Activated CD8-positive, alpha-beta T cell treated with anti-CD3 and anti-CD28 coated beads, Interleukin-2, amount 10 ng/mL, durations not matched to agents 7 days and 5 days (primary cell): ENCODE measurements at regions of chr3 and their contacts with region 1.

Region 1: GRCh38 chr3:192816351-192816750 is 89.0 kb upstream of the FGF12 start:
- DNase-seq: no peak
- ATAC-seq: no peak
- H3K4me3 Mint-ChIP-seq: no peak overlapping the region
- H3K27ac Mint-ChIP-seq: no peak overlapping the region
- H3K4me1 Mint-ChIP-seq: peaks cover 38% of the 10 kb centered on the region
- H3K27me3 Mint-ChIP-seq: peaks cover 2% of the 10 kb centered on the region

Region 2: GRCh38 chr3:192778508-192778907 is 37.8 kb before region 1 on chr3:
- CTCF ChIA-PET with region 1: no interaction called
- POLR2A ChIA-PET with region 1: no interaction called
- DNase-seq: no peak
- ATAC-seq: no peak
- H3K4me3 Mint-ChIP-seq: no peak overlapping the region
- H3K27ac Mint-ChIP-seq: no peak overlapping the region
- H3K4me1 Mint-ChIP-seq: no peaks in the 10 kb centered on the region
- H3K27me3 Mint-ChIP-seq: no peaks in the 10 kb centered on the region

Region 3: DNA sequence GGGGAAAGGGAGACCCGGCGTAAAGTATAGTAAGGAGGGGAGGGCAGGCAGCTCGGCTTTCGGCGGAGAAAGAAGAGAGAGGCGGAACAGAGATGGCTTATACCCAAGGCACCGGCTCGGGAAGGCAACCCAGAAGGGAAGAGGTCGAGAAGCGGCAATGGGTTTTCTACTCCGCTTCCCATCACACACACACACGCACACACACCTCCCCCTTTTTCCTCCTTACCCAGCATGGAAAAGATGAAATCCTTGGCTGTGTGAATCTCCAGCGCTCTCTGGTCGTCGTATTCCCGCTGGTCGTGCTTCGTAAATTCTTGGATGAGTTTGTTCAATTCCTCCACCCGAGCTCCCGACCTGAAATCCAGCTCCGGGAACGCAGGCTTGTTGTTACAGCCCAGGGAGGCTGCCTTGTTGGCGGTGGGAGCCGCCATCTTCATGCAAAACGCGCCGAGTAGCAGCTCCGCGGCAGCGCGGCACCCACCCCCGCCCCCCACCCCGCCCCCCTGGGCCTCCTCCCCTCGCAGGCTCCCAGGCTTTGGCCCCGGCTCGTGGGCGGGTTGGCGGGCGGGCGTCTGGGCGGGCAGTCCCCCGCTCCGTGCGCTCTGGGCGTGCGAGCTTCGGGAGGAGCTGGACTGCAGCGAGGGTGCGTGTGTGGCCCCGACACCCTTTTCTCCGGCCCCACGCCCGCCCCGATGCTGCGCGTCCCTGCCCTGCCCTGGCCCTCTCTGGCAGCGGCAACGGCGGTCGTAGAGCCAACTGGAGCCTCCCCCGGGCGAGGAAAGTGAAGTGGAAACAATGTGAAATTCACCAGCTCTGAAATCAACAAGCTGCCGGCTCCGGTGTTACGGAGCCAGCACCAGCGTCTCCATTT is 101.3 kb after region 1 on chr3 and contains the start of gene MB21D2:
- CTCF ChIA-PET with region 1: interaction called, 21 read pairs
- POLR2A ChIA-PET with region 1: no interaction called
- DNase-seq: peak; percentile 64
- ATAC-seq: peak; percentile 85
- H3K4me3 Mint-ChIP-seq: peak within 1 kb of the TSS; percentile 90
- H3K27ac Mint-ChIP-seq: peak within 1 kb of the TSS; percentile 87
- H3K4me1 Mint-ChIP-seq: peaks cover 44% of the 10 kb centered on the region
- H3K27me3 Mint-ChIP-seq: peaks cover 55% of the 10 kb centered on the region
- total RNA-seq, gene MB21D2: 6.5 to 7.2 TPM

Region 4: DNA sequence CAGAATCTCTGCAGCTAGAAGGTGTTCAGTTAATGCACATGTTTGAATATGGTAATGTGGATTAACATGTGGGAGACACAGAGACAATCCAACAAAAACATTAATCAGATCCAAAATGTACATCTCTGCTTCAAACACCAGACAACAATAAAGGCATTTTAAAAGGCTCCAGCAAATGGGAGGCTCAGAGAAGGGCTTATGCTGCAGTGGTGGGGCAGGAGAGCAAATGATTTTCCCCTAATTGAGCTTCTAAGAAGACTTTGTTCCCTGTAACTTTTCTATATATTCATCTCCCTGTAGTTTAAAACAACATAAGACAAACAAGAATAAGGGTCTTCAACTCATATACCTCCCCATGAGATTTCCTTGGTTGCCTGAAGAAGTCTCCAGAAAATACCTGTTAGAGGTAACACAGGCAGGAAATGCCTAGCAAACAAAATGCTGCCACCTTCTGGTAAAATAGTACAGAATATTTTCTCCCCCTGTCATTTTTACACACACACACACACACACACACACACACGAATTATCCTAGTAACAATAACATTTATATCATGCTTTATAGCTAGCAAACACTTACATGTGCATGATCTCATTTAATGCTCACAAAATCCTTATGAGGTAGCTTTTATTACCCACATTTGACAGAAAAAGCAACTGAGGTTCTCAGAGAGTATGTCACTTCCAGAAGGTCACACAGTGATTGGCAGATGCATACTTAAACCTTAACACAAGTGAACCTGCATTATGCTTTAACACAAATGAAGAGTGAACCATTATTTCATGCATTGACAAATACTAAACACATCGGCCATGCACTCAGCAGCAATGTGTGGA is 224.7 kb after region 1 on chr3:
- CTCF ChIA-PET with region 1: interaction called, 116 read pairs
- POLR2A ChIA-PET with region 1: no interaction called
- DNase-seq: peak; percentile 22
- ATAC-seq: no peak
- H3K4me3 Mint-ChIP-seq: no peak overlapping the region
- H3K27ac Mint-ChIP-seq: no peak overlapping the region
- H3K4me1 Mint-ChIP-seq: peaks cover 5% of the 10 kb centered on the region
- H3K27me3 Mint-ChIP-seq: no peaks in the 10 kb centered on the region